ENCODE measurements at regions of chr20 and their contacts with region 1.

Region 1: GRCh38 chr20:34363062-34363464 is at the start of gene ITCH:
- DNase-seq: peak; percentile 93 to 97 (median 96)
- H3K4me3 ChIP-seq: peak within 1 kb of the TSS; percentile 61 to 99 (median 92)
- H3K27ac ChIP-seq: peak within 1 kb of the TSS; percentile 72 to 98 (median 94)
- H3K27me3 ChIP-seq: no peaks in the 10 kb centered on the region
- CTCF ChIP-seq: peak in 33 of 56 donors; percentile 6 to 57 (median 26)
- total RNA-seq, gene ITCH: 60.3 to 137 (median 86.3) TPM

Region 2: DNA sequence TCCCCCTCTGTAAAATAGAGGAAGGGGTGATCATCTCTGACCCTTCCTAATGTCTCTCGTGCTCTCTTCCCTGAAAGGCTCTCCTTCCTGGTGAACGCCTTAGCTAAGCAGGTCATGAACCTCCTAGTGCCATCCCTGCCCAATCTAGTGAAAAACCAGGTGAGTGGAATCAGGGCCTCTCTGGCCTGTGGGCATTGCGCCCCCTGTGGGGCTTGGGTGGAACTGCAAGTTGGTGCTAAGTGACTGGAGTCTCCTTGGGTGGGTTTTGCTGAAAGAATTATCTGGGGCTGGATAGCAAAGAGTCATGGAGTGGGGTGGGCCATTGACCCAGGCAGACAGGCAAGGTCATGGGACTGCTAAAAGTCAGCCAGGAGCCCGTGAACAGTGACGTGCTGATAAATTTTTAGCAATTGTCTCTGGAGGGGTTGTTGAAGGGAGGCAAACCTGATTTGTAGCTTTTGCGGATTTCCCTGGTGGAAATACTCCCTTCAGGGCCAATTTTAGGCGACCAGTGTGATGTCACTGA is 1071.2 kb before region 1 on chr20:
- intact Hi-C with region 1: no loop called
- DNase-seq: peak in 8 of 10 donors; percentile 22 to 71 (median 56)
- H3K4me3 ChIP-seq: no peak overlapping the region
- H3K27ac ChIP-seq: peak overlapping the region in 1 of 59 donors; percentile 2
- H3K27me3 ChIP-seq: peaks cover 0 to 5% (median 0%) of the 10 kb centered on the region in 45 donors
- CTCF ChIP-seq: peak; percentile 72 to 96 (median 88)

Region 3: DNA sequence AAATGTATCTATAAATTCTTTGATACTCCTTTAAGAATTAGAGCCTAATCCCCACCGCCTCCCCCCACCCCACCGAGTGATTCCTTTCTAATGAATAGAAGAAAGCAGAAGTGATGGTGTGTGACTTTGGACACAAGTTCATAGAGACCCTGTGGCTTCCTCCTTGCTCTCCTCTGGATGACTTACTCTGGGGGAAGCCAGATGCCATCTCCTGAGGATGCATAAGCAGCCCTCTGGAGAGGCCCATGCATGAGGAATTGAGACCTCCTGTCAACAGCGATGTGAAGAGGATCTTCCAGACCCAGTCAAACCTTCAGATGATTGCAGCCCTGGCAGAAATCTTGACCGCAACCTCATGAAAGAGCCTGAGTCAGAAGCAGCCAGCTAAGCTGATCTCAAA is 81.0 kb before region 1 on chr20:
- intact Hi-C with region 1: no loop called
- DNase-seq: no peak
- H3K4me3 ChIP-seq: no peak overlapping the region
- H3K27ac ChIP-seq: no peak overlapping the region
- H3K27me3 ChIP-seq: no peaks in the 10 kb centered on the region
- CTCF ChIP-seq: no peak

Region 4: GRCh38 chr20:34403908-34404307 is 40.8 kb after region 1 on chr20:
- intact Hi-C with region 1: loop called in 1 of 2 experiments (anchors 5 kb)
- DNase-seq: no peak
- H3K4me3 ChIP-seq: no peak overlapping the region
- H3K27ac ChIP-seq: peak overlapping the region in 26 of 59 donors; percentile 0 to 73 (median 43)
- H3K27me3 ChIP-seq: no peaks in the 10 kb centered on the region
- CTCF ChIP-seq: no peak

Region 5: GRCh38 chr20:34516247-34517113 is 153.4 kb after region 1 on chr20 and contains the start of gene DYNLRB1:
- intact Hi-C with region 1: loop called in 1 of 2 experiments (anchors 5 kb)
- DNase-seq: peak; percentile 95 to 98 (median 97)
- H3K4me3 ChIP-seq: peak within 1 kb of the TSS; percentile 69 to 99 (median 89)
- H3K27ac ChIP-seq: peak within 1 kb of the TSS; percentile 68 to 99 (median 98)
- H3K27me3 ChIP-seq: no peaks in the 10 kb centered on the region
- CTCF ChIP-seq: peak in 20 of 56 donors; percentile 10 to 50 (median 22)
- total RNA-seq, gene DYNLRB1: 153 to 387 (median 261) TPM

Measured in dorsolateral prefrontal cortex (tissue), 120 donors.